ENCODE measurements at regions of chr6 and their contacts with region 1.

Region 1: DNA sequence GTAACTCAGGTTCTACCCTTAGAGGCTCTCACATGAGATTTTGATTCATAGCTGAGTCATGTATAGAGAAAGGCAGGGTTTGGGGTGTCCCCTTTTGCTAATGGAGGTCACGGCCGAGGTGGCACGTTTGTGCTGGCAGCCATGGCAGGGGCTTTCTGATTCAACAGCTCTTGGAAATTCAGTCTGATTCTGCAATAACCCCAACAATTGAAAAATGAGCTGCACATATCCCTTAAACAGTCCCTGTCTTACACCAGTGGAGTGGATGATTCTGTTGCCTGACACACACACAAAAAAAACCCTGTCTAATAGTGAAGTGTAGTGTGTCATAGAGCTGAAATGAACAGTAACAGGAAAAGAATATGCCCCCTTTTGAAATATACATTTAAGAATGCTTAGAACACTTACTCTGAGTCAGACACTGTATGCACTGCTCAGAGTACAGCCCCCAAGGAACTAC is 40.4 kb upstream of the ARG1 start:
- DNase-seq: no peak
- H3K4me3 Mint-ChIP-seq: no peak overlapping the region
- H3K27ac Mint-ChIP-seq: peak overlapping the region; percentile 48
- H3K4me1 Mint-ChIP-seq: peaks cover 42% of the 10 kb centered on the region
- H3K27me3 Mint-ChIP-seq: peaks cover 2% of the 10 kb centered on the region

Region 2: GRCh38 chr6:130885392-130886192 is 647.0 kb before region 1 on chr6:
- intact Hi-C with region 1: loop called (anchors 1 kb)
- DNase-seq: peak; percentile 35
- H3K4me3 Mint-ChIP-seq: no peak overlapping the region
- H3K27ac Mint-ChIP-seq: no peak overlapping the region
- H3K4me1 Mint-ChIP-seq: no peaks in the 10 kb centered on the region
- H3K27me3 Mint-ChIP-seq: peaks cover 1% of the 10 kb centered on the region

Region 3: DNA sequence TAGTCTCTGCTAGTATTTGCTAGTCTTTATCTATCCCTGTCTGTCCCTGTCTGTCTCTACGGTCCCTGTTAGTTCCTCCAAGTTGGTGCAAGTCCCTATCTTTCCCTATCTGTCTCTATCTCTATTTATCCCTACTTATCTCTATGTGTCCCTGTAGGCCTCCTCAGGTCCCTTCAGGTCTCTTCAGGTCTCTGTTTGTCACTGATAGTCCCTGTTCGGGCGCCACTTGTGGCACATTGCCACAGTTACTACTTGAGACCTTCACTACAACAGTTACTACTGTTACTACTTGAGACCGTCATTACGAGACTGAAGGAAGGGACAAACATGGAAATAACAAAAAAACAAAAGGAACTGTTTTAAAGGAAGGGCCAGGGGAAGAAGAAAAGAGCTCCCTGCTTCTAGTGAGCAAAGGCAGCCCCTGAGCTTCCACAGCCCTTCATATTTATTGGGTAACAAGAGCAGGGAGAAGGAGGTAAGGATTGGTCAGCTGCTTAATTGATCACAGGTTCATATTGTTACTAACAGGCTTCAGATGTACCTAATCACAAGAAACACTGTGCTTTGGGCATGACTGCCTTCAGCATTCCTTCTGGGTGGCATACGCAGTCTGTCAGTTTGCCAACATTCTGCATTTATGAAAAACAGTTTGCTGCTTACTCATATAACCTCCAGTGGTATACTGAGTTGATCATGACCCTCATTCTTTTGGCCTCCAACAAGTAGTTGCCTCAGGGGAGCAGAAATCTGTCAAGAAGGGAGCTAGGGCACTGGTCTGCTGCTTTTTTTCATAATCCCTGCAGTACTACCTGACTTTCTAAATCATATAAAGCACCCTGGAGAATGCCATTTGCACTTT is 478.0 kb before region 1 on chr6:
- intact Hi-C with region 1: no loop called
- DNase-seq: no peak
- H3K4me3 Mint-ChIP-seq: no peak overlapping the region
- H3K27ac Mint-ChIP-seq: no peak overlapping the region
- H3K4me1 Mint-ChIP-seq: peaks cover 3% of the 10 kb centered on the region
- H3K27me3 Mint-ChIP-seq: peaks cover 3% of the 10 kb centered on the region

Region 4: DNA sequence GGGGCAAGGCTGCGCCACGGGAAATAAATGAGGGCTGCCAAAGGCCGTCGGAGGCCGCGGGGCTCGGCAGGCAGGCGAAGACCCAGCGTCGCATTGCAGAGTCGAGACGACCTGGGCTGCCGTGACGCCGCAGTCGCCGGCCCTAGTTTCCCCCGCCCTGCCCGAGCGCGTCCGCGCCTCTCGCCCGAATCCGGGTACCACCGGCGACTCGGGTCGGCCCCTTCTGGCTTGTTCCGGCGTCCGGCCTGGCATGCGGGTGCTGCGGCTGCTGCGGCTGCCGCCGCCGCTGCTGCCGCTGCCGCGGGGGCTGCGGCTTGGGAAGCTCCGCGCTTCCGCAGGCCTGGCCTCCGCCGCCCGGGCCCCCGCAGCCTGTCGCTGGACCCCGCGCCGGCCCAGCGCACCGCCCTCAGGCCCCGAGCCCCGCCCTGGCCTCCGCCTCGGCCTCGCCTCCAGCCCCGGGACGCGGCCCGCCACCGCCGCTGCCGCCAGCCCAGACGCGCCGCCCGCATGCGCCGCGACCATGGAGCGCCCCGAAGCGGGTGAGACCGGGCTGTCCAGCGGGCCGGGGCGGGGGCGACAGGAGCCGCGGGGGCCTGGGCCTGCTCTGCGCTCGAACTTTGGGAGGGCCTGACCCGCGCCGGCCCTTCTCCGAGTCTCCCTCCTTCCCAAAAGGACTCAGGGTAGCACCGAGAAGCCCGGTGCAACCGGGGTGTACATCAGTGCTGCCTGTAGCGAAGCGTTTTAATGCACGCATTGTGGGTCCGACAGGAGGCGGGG is 397.2 kb before region 1 on chr6 and contains the start of gene AKAP7:
- intact Hi-C with region 1: loop called (anchors 1 kb)
- DNase-seq: peak; percentile 46
- H3K4me3 Mint-ChIP-seq: peak within 1 kb of the TSS; percentile 93
- H3K27ac Mint-ChIP-seq: peak within 1 kb of the TSS; percentile 92
- H3K4me1 Mint-ChIP-seq: peaks cover 14% of the 10 kb centered on the region
- H3K27me3 Mint-ChIP-seq: peaks cover 32% of the 10 kb centered on the region
- total RNA-seq, gene AKAP7: 3.1 and 3.4 TPM in 2 replicates

Region 5: DNA sequence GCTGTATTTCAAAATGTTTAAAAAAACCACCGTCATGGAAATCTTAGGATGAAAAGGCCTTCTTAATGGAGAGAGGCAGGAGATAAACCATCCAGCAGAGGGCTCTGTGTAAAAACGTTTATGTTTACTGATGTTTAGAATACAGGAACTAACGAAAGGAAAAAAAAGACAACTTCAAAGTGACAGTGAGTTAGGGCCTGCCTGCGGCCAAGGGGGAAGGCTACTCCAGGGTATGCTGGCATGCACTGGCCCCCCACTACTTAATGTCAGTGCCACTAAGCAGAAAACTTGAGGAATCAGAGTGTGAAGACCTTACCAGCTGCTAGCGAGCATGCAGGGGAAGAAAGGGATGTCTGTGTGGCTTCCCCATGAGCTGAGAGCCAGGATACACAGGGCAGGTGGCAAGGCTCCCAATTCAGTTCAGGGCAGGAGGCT is 349.6 kb before region 1 on chr6:
- intact Hi-C with region 1: loop called (anchors 1 kb)
- DNase-seq: no peak
- H3K4me3 Mint-ChIP-seq: no peak overlapping the region
- H3K27ac Mint-ChIP-seq: peak overlapping the region; percentile 79
- H3K4me1 Mint-ChIP-seq: peaks cover 5% of the 10 kb centered on the region
- H3K27me3 Mint-ChIP-seq: no peaks in the 10 kb centered on the region

Region 6: DNA sequence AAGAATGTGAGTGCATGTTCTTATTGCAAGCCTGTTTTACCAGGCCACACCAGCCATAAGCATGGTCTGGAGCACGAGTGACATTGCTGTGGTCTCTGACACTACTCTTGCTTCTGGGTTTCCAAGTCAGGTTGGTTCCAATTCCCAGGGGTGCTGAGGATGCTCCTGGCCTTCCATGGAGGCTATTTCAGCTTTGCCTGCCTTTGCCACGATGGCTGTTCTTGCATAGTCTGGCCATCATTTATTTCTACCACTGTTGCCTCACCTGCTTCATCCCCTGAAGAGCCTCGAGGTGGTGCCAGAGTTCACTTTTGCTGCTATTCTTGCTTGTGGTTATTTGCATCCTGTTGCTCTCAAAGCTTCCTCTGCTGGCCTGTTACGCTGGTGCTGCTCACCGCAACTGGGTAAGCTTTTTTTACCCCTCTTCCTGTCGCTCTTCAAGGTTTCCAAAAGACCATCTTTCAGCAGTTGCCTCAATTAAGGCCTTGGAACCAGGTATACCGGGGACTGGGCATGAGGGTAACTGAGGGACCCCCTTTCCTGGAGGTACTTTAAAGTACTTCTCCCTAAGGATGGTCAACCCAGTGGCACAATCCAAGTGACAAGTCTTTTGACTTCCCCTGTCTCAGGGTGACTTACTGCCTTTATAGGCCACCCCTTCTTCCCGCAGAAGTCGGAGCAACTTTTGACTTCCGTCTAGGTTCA is 332.9 kb before region 1 on chr6:
- intact Hi-C with region 1: loop called (anchors 1 kb)
- DNase-seq: peak; percentile 76
- H3K4me3 Mint-ChIP-seq: peak overlapping the region; percentile 65
- H3K27ac Mint-ChIP-seq: peak overlapping the region; percentile 93
- H3K4me1 Mint-ChIP-seq: peaks cover 40% of the 10 kb centered on the region
- H3K27me3 Mint-ChIP-seq: no peaks in the 10 kb centered on the region

Region 7: GRCh38 chr6:131451321-131452144 is 81.1 kb before region 1 on chr6:
- intact Hi-C with region 1: loop called (anchors 5 kb)
- DNase-seq: no peak
- H3K4me3 Mint-ChIP-seq: no peak overlapping the region
- H3K27ac Mint-ChIP-seq: peak overlapping the region; percentile 74
- H3K4me1 Mint-ChIP-seq: peaks cover 26% of the 10 kb centered on the region
- H3K27me3 Mint-ChIP-seq: no peaks in the 10 kb centered on the region

Region 8: DNA sequence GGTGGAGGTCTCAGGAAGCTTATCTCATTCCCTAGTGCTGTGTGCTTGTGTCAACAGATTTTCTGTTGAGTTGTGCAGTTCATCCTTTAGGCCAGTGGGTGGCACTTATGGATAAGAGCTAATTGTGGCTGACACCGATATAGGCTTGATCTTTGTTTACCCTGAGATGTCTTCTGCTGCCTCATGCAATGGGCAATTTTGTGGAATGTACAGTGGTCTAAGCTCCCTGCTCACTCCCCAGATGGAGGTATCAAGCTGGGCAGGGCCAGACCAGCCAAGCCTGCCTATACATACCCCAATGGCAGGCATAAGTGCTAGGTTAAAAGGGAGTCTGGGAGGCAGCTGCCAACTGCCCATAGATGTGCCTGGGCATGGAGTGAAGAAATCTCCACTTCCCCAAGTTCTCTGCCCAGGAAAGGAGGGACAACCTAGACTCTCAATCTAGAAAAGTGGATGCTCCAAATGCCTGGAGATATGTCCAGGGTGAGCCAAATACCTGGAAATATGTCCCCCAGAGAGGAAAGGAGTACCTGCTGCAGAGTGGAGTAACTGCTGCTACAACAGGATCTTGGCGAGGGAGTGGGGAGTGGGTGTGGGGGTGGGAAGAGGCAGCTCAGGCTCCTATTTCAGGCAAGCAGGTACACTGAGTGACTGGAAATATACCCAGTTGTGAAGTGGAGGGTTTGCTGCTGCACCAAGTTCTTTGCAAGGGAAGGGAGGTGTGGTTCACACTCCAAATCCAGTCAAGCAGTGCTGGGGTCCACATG is 12.8 kb before region 1 on chr6:
- intact Hi-C with region 1: loop called (anchors 1 kb)
- DNase-seq: no peak
- H3K4me3 Mint-ChIP-seq: no peak overlapping the region
- H3K27ac Mint-ChIP-seq: no peak overlapping the region
- H3K4me1 Mint-ChIP-seq: peaks cover 18% of the 10 kb centered on the region
- H3K27me3 Mint-ChIP-seq: peaks cover 20% of the 10 kb centered on the region

Measured in activated T-helper 2 cell treated with anti-CD3 and anti-CD28 coated beads, Interferon-gamma antibody, Interleukin-2, Interleukin-4, amounts not matched to agents 10 μg/mL and 5 μg/mL and 100 μg/mL, durations not matched to agents 14 hours and 24 hours and 36 hours (primary cell).